Calu3 (cell line): ENCODE measurements at regions of chr2 and their contacts with region 1.

Region 1: GRCh38 chr2:113889471-113890252 is at the start of gene ACTR3:
- DNase-seq: peak; percentile 98
- H3K4me3 Mint-ChIP-seq: peak within 1 kb of the TSS; percentile 90
- H3K27ac Mint-ChIP-seq: peak within 1 kb of the TSS; percentile 98
- H3K4me1 Mint-ChIP-seq: peaks cover 68% of the 10 kb centered on the region
- H3K27me3 Mint-ChIP-seq: no peaks in the 10 kb centered on the region
- CTCF ChIP-seq: no peak
- total RNA-seq, gene ACTR3: 277 and 296 TPM in 2 replicates

Region 2: DNA sequence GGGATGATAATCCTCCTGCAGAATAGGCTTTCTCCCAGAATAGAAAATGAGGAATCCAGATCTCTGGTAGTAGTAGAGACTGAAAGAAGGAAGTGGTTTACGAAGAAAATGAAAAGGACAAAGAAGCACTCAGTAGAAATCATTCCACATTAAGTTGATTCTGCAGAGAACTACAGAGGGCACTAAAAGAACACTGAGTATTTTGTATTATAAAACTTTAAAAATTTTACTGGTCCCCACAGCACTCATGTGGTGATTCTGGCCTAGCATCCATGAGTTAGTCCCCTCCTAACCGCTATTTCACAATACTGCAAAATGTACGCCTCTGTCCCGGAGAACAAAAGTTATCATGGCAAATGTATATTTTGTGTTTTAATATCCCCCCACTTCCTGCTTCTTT is 90.3 kb before region 1 on chr2:
- CTCF ChIA-PET with region 1: no interaction called
- intact Hi-C with region 1: loop called (anchors 5 kb)
- DNase-seq: no peak
- H3K4me3 Mint-ChIP-seq: no peak overlapping the region
- H3K27ac Mint-ChIP-seq: no peak overlapping the region
- H3K4me1 Mint-ChIP-seq: peaks cover 36% of the 10 kb centered on the region
- H3K27me3 Mint-ChIP-seq: no peaks in the 10 kb centered on the region
- CTCF ChIP-seq: no peak

Region 3: GRCh38 chr2:113834051-113834730 is 55.5 kb before region 1 on chr2:
- CTCF ChIA-PET with region 1: no interaction called
- intact Hi-C with region 1: no loop called
- DNase-seq: no peak
- H3K4me3 Mint-ChIP-seq: no peak overlapping the region
- H3K27ac Mint-ChIP-seq: no peak overlapping the region
- H3K4me1 Mint-ChIP-seq: no peaks in the 10 kb centered on the region
- H3K27me3 Mint-ChIP-seq: no peaks in the 10 kb centered on the region
- CTCF ChIP-seq: no peak

Region 4: GRCh38 chr2:113876503-113877387 is 12.9 kb before region 1 on chr2:
- CTCF ChIA-PET with region 1: interaction called, 4 read pairs
- intact Hi-C with region 1: loop called (anchors 1 kb)
- DNase-seq: peak; percentile 95
- H3K4me3 Mint-ChIP-seq: peak overlapping the region; percentile 56
- H3K27ac Mint-ChIP-seq: peak overlapping the region; percentile 91
- H3K4me1 Mint-ChIP-seq: peaks cover 45% of the 10 kb centered on the region
- H3K27me3 Mint-ChIP-seq: peaks cover 12% of the 10 kb centered on the region
- CTCF ChIP-seq: no peak

Region 5: DNA sequence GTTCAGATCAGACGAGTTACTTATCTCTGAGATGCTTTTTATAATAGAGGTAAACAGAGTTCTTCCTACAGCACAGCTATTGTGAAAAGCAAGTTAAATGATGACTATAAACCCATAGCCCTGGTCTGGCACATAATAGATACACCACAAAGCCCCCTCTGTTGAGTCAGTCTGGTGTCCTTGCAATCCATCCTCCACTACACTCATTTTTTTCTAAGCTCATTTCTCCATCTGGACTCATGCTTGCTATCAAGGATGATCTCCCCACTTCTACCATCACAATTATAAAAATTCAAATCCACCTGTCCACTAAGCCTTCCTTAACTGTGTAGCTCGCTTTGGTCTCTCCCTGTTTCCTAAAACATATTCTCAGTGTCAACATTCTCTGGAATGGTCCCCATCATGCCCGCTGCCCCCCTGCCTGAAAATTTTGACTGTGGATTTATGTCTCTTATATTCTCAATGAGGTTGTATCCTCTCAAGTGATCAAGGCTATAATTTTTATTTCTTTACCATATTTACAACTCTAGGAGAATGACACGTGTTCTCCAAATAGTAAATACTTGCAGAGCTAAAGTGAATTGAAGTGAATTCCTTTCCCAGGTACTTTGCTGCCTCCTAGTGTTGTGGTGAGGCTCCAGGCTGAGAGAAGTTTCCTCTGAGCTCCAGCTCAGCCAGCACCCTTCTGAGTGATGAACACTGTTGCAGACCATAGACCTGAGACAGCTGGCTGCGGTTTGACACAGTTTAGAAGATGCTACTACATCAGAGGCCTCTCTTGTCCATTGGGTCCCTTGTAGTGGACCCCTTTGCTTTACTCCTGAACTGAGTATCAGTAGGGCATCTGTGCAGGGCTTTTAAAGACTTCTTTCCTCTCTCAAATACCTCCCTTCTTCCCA is 661.5 kb after region 1 on chr2:
- CTCF ChIA-PET with region 1: no interaction called
- intact Hi-C with region 1: loop called (anchors 10 kb)
- DNase-seq: peak; percentile 71
- H3K4me3 Mint-ChIP-seq: no peak overlapping the region
- H3K27ac Mint-ChIP-seq: peak overlapping the region; percentile 12
- H3K4me1 Mint-ChIP-seq: peaks cover 44% of the 10 kb centered on the region
- H3K27me3 Mint-ChIP-seq: peaks cover 22% of the 10 kb centered on the region
- CTCF ChIP-seq: peak; percentile 78